ENCODE measurements at regions of chr5 and their contacts with region 1.

Region 1: DNA sequence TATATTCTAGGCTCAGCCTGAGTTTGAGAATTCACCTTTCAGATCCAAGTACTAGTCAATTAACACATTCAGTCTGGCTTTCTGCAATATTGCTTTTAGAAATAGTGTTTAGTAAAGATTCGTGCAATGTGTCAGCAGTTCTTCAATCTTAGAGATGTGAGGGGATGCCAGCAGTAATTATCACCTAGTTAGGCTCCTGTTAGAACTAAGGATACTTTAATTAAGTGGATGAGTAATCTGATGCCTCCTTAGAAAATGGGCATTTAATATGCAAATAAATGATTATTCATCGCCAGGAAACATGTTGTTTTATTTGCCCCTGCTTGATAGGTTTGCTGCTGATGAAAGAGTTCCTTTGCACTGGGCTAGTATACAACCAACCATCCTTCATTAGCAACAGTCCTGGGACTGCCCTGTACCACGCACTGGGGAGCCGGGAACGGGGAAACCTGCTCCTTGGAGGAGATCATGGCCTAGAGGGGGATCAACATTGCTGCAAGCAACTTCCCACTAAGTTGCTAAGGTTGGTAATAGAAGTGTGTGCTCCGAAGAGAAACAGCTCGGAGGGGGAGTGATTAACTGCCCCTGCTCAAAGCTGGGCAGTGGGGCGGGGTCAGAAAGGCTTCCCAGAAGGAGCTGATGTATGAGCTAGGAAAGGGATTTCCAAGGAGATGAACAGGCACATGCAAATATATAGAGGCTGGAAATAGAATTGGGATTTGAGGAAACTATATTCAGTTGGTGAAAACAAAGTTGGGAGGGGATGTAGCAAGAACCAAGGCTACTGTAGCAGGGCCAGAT is 231.8 kb downstream of the DRD1 start:
- DNase-seq: no peak
- ATAC-seq: no peak
- H3K4me3 ChIP-seq: no peak overlapping the region
- H3K27ac ChIP-seq: no peak overlapping the region
- H3K4me1 ChIP-seq: no peaks in the 10 kb centered on the region
- H3K27me3 ChIP-seq: no peaks in the 10 kb centered on the region
- CTCF ChIP-seq: no peak

Region 2: DNA sequence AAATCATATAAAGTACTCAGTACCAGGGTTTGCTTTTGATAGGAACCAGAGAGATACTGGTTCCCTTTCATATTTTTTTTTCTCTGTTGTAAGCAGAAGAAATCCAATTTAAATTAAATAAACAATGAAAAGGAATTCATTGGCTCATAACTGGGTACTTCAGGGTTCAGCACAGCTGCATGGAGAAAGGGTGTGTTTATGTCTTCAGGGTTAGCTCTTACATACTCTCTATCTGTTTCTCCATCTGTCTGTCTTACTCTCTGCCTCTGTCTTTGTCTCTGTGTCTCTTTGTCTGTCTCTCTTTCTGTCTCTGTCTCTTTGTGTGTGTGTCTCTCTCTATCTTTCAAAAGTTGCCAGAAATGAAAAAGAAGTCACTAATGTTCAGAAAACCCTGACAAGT is 141.9 kb before region 1 on chr5:
- CTCF ChIA-PET with region 1: no interaction called
- POLR2A ChIA-PET with region 1: no interaction called
- in situ Hi-C with region 1: no loop called
- intact Hi-C with region 1: no loop called
- DNase-seq: no peak
- ATAC-seq: no peak
- H3K4me3 ChIP-seq: no peak overlapping the region
- H3K27ac ChIP-seq: no peak overlapping the region
- H3K4me1 ChIP-seq: no peaks in the 10 kb centered on the region
- H3K27me3 ChIP-seq: no peaks in the 10 kb centered on the region
- CTCF ChIP-seq: no peak

Region 3: DNA sequence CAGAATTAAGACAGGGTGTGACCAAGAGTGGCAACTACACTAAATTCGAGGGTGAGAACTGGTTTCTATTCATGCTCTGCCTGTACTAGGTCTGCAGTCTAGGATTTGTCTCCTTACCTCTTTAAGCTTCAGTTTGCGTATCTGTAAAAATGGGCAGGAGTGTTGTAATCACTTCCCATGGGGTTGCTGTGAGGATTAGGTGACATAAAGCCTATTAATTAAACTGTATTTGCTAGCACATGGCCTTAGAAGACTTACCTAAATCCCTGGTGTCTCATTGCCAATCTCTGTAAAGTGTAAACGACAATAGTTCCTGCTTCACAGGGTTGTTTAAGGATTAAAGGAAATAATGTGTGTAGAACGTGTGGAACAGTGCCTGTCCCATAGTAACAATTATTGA is 38.3 kb after region 1 on chr5:
- CTCF ChIA-PET with region 1: no interaction called
- POLR2A ChIA-PET with region 1: no interaction called
- in situ Hi-C with region 1: no loop called
- intact Hi-C with region 1: loop called (anchors 2 kb)
- DNase-seq: no peak
- ATAC-seq: no peak
- H3K4me3 ChIP-seq: no peak overlapping the region
- H3K27ac ChIP-seq: no peak overlapping the region
- H3K4me1 ChIP-seq: no peaks in the 10 kb centered on the region
- H3K27me3 ChIP-seq: no peaks in the 10 kb centered on the region
- CTCF ChIP-seq: no peak

Region 4: DNA sequence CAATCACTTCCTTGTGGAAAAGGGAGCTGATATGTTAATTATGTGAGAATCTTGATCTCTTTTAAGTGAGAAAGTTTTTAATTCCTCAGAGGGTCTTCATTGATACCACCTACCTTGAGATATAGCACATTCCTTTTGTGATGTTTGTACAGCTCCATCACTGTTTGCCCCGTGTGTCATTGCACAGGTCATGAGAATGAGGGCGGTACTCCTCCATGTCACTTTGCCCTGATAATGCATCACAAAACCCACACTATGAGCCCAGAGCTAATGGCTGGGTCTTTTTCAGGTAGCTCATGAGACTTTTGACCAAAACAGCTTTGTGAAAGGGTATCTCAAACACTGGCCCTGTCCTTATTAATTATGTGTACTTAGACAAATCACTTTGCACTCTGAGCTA is 88.0 kb after region 1 on chr5:
- CTCF ChIA-PET with region 1: no interaction called
- POLR2A ChIA-PET with region 1: no interaction called
- in situ Hi-C with region 1: no loop called
- intact Hi-C with region 1: no loop called
- DNase-seq: no peak
- ATAC-seq: no peak
- H3K4me3 ChIP-seq: no peak overlapping the region
- H3K27ac ChIP-seq: no peak overlapping the region
- H3K4me1 ChIP-seq: no peaks in the 10 kb centered on the region
- H3K27me3 ChIP-seq: no peaks in the 10 kb centered on the region
- CTCF ChIP-seq: no peak

Measured in Panc1 (cell line).